ENCODE measurements at regions of chr12 and their contacts with region 1.

Region 1: GRCh38 chr12:105420659-105421240 is 90.3 kb downstream of the C12orf75 start:
- DNase-seq: peak; percentile 31
- ATAC-seq: peak; percentile 62
- H3K4me3 Mint-ChIP-seq: no peak overlapping the region
- H3K27ac Mint-ChIP-seq: no peak overlapping the region
- H3K4me1 Mint-ChIP-seq: no peaks in the 10 kb centered on the region
- H3K27me3 Mint-ChIP-seq: peaks cover 13% of the 10 kb centered on the region
- CTCF ChIP-seq: peak; percentile 79

Region 2: GRCh38 chr12:106136263-106136662 is 715.5 kb after region 1 on chr12:
- CTCF ChIA-PET with region 1: interaction called, 47 read pairs
- POLR2A ChIA-PET with region 1: no interaction called
- intact Hi-C with region 1: no loop called
- DNase-seq: peak; percentile 56
- ATAC-seq: no peak
- H3K4me3 Mint-ChIP-seq: no peak overlapping the region
- H3K27ac Mint-ChIP-seq: no peak overlapping the region
- H3K4me1 Mint-ChIP-seq: peaks cover 9% of the 10 kb centered on the region
- H3K27me3 Mint-ChIP-seq: peaks cover 60% of the 10 kb centered on the region
- CTCF ChIP-seq: peak; percentile 24

Region 3: GRCh38 chr12:106282457-106283097 is 861.8 kb after region 1 on chr12:
- CTCF ChIA-PET with region 1: interaction called, 3 read pairs
- POLR2A ChIA-PET with region 1: no interaction called
- intact Hi-C with region 1: loop called (anchors 2 kb)
- DNase-seq: no peak
- ATAC-seq: peak; percentile 84
- H3K4me3 Mint-ChIP-seq: no peak overlapping the region
- H3K27ac Mint-ChIP-seq: no peak overlapping the region
- H3K4me1 Mint-ChIP-seq: peaks cover 29% of the 10 kb centered on the region
- H3K27me3 Mint-ChIP-seq: peaks cover 5% of the 10 kb centered on the region
- CTCF ChIP-seq: peak; percentile 76

Region 4: DNA sequence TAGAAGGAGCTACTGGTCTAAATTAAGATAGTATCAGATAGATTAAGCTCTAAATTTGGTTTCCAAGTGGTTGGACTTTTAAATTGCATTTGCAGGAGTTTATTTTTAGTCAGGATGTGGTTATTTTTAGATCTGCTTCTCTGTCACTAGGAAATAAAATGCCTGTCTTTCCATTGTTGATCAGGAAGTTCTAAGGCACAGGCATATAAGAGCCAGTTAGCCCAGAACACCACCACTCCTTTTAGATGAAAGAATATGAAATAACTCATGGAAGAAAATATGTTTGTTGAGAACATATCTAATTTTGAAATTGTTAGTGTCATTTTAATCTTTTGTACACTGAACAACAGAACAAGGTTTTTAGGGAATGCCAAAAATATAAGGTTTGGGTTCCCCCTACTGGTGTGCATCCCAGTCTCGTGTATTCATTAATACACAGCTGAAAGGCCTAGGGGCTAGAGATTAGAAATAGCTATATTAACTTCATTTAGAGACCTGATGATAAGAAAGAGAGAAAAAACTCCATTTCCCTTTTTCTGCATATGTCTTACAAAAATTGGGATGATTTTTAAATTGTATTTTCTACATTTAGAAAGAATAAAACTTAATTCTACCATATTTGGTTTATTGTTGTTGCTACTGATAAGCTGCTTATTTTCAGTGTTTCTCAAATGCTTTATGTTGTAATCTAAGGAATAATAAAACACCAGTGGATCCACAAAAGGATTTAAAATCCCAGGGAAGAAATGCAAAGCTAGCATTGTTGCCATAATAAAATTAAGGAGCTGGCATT is 1421.0 kb after region 1 on chr12:
- CTCF ChIA-PET with region 1: no interaction called
- POLR2A ChIA-PET with region 1: no interaction called
- intact Hi-C with region 1: loop called (anchors 5 kb)
- DNase-seq: no peak
- ATAC-seq: no peak
- H3K4me3 Mint-ChIP-seq: no peak overlapping the region
- H3K27ac Mint-ChIP-seq: no peak overlapping the region
- H3K4me1 Mint-ChIP-seq: no peaks in the 10 kb centered on the region
- H3K27me3 Mint-ChIP-seq: no peaks in the 10 kb centered on the region
- CTCF ChIP-seq: no peak

Region 5: GRCh38 chr12:107105410-107105703 is 1684.6 kb after region 1 on chr12:
- CTCF ChIA-PET with region 1: no interaction called
- POLR2A ChIA-PET with region 1: no interaction called
- intact Hi-C with region 1: loop called (anchors 5 kb)
- DNase-seq: no peak
- ATAC-seq: no peak
- H3K4me3 Mint-ChIP-seq: no peak overlapping the region
- H3K27ac Mint-ChIP-seq: no peak overlapping the region
- H3K4me1 Mint-ChIP-seq: peaks cover 2% of the 10 kb centered on the region
- H3K27me3 Mint-ChIP-seq: peaks cover 25% of the 10 kb centered on the region
- CTCF ChIP-seq: no peak

Measured in activated B cell treated with CpG ODN at 0.5 μM for 24 hours (primary cell).